Sigmoid colon (tissue), 7 donors: ENCODE measurements at regions of chr2 and their contacts with region 1.

Region 1: DNA sequence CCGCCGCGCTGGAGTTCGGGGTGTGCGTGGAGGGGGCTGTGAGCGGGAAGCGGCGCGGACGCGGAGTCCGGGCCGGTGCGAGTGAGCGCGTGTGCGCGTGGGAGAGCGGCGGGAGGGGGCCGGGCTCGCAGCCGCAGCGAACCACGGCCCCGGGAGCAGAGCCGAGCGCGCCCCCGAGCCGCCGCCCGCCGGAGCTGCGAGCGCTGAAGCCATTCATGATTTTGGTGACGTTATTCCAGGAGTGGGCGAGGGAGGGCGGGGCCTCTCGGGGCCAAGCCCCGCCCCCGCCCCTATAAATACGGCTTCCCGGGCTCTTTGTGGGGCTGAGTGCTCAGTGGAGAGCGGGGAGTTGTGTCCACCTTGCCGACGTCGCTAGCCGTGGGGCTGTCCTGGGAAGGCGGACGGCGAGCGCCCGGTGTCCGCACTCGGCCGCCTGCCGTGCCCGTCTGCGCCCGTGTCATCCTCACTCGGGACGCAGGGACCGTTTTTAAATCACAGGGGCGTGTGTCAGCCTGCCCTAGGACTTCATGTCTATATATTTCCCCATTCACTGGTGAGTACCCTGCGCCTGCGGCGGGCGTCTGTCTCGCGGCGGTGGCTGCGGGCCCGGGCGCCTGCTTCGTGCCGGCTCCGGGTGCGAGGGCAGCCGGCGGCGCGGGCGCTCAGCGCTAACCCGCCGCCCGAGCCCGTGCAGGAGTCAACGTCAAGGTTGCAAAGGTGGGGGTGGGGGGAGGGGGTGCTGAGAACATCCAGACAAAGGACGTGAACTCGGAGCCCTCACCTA is at the start of gene LBH:
- DNase-seq: peak; percentile 93
- H3K4me3 ChIP-seq: peak within 1 kb of the TSS; percentile 68 to 79 (median 72)
- H3K27ac ChIP-seq: peak within 1 kb of the TSS; percentile 86 to 93 (median 92)
- H3K4me1 ChIP-seq: peaks cover 0 to 45% (median 33%) of the 10 kb centered on the region in 4 donors
- H3K27me3 ChIP-seq: no peaks in the 10 kb centered on the region
- CTCF ChIP-seq: no peak
- EP300 ChIP-seq: no peak
- POLR2A ChIP-seq: peak; percentile 92 to 99
- total RNA-seq, gene LBH: 11.4 to 25.0 (median 22.2) TPM

Region 2: DNA sequence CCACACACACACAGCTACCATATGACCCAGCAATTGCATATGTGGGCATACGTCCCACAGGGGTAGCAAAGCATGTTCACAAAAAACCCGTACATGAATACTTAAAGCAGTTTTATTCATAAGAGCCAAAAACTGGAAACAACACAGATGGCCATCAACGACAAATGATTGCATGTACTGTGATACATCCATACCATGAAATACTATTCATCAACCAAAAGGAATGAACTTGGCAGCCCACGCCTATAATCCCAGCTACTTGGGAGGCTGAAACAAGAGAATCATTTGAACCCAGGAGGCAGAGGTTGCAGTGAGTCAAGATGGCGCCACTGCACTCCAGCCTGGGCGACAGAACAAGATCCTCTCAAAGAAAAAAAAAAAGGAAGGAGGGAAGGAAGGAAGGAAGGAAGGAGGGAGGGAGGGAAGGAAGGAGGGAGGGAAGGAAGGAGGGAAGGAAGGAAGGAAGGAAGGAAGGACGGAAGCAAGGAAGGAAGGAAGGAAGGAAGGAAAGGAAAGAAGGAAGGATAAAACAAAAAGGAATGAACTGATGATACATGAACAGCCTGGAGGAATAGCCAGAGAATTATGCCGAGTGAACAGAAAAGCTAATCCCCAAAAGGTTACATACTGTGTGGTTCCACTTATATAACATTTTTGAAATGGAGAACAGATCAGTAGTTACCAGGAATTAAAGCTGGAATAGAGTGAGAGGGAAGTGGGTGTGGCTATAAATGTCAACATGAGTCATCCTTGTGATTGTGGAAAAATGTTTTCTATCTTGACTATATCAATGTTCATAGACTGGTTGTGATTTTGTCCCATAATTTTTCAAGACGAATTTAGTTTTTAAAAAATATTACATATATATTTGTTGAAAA is 104.1 kb before region 1 on chr2:
- intact Hi-C with region 1: no loop called
- DNase-seq: no peak
- H3K4me3 ChIP-seq: no peak overlapping the region
- H3K27ac ChIP-seq: no peak overlapping the region
- H3K4me1 ChIP-seq: no peaks in the 10 kb centered on the region
- H3K27me3 ChIP-seq: no peaks in the 10 kb centered on the region
- CTCF ChIP-seq: no peak
- EP300 ChIP-seq: no peak
- POLR2A ChIP-seq: no peak

Region 3: GRCh38 chr2:30146438-30147147 is 84.8 kb before region 1 on chr2 and contains the start of gene YPEL5:
- intact Hi-C with region 1: loop called (anchors 2 kb)
- DNase-seq: peak; percentile 100
- H3K4me3 ChIP-seq: peak within 1 kb of the TSS; percentile 99 to 100 (median 100)
- H3K27ac ChIP-seq: peak within 1 kb of the TSS; percentile 93 to 100 (median 100)
- H3K4me1 ChIP-seq: peaks cover 0 to 43% (median 40%) of the 10 kb centered on the region in 4 donors
- H3K27me3 ChIP-seq: no peaks in the 10 kb centered on the region
- CTCF ChIP-seq: no peak
- EP300 ChIP-seq: peak in 1 of 4 donors; percentile 59
- POLR2A ChIP-seq: peak; percentile 89 to 93
- total RNA-seq, gene YPEL5: 116 to 155 (median 139) TPM

Region 4: DNA sequence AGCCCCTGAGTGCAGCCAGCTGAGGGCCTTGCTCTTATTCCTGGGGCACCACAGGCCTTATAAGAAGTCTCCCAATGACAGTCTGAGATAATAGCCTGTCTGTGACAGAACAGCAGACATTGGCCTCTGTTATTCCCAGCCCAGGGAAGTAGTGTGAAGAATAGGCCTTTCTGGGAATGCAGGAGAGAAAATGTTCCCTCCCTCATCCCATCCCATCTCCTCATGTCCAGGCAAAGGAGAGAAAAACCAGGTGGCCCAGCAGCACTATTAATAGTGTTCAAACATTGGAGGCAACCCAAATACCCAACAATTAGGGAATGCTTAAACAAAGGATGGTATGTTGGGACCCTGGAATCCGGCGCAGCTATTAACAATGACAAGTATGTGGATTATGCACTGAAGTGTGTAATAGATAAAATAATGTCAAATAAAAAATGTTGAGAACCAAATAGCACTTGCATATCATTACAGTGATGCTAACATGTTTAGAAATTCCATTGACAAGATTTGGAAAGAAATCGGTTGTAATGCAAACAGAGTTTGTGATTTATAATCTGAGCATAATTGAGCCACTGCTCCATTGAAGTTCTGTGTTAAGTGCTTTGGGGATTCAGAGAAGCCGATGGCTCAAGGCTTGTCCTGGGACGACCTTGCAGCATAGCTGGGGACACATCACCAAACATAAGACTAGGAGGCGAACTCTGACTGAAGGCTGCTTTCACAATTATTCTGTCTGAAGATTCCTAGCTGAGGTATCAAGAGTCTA is 69.2 kb after region 1 on chr2:
- intact Hi-C with region 1: loop called (anchors 5 kb)
- DNase-seq: no peak
- H3K4me3 ChIP-seq: no peak overlapping the region
- H3K27ac ChIP-seq: peak overlapping the region; percentile 73 to 88 (median 82)
- H3K4me1 ChIP-seq: peaks cover 0 to 27% (median 24%) of the 10 kb centered on the region in 4 donors
- H3K27me3 ChIP-seq: no peaks in the 10 kb centered on the region
- CTCF ChIP-seq: no peak
- EP300 ChIP-seq: peak in 3 of 4 donors; percentile 56 to 63 (median 61)
- POLR2A ChIP-seq: no peak

Region 5: DNA sequence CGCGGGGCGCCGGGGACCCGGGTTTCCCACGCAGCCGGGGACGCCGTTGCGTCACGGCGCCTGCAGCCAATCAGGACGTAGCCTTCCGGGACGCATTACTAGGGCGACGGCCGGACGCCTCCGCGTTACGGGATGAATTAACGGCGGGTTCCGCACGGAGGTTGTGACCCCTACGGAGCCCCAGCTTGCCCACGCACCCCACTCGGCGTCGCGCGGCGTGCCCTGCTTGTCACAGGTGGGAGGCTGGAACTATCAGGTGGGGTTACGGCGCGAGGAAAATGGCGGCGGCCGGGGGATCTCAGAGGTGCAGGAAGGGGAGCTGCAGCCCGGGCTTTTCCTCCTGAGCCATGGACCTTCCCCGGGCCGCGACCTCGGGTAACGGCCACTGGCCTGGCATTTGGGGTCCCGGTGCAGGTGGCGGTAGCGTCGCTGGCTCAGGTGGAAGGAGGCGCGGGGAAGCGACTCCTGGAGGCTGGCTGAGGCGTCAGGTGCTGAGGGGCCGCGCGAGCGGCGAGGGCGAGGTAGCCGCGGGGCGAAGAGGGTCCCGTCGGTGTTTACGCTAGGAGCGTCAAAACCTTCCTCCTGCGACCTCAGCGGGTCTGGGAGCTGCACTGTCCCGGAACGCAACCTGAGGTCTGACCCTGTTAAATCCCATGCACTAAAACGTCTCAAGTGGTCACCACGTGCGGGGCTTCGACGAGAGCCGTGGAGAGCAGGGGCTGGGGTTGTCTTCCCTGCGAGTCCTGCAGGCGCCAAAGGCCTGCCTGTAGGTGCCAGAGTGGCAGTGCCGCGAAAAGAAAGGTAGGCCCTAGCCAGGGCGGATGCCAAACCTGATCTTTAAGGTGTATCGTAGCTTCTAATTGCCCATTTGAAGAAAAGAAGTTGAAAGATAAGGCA is 216.0 kb after region 1 on chr2 and contains the start of gene LCLAT1:
- intact Hi-C with region 1: loop called (anchors 5 kb)
- DNase-seq: peak; percentile 89
- H3K4me3 ChIP-seq: peak within 1 kb of the TSS; percentile 77 to 98 (median 86)
- H3K27ac ChIP-seq: peak within 1 kb of the TSS; percentile 76 to 87 (median 85)
- H3K4me1 ChIP-seq: peaks cover 0 to 20% (median 14%) of the 10 kb centered on the region in 4 donors
- H3K27me3 ChIP-seq: no peaks in the 10 kb centered on the region
- CTCF ChIP-seq: peak in 1 of 4 experiments; percentile 7
- EP300 ChIP-seq: no peak
- POLR2A ChIP-seq: no peak
- total RNA-seq, gene LCLAT1: 10.0 to 17.2 (median 13.4) TPM